CD4-positive, alpha-beta T cell (primary cell): ENCODE measurements at regions of chr6 and their contacts with region 1.

Region 1: DNA sequence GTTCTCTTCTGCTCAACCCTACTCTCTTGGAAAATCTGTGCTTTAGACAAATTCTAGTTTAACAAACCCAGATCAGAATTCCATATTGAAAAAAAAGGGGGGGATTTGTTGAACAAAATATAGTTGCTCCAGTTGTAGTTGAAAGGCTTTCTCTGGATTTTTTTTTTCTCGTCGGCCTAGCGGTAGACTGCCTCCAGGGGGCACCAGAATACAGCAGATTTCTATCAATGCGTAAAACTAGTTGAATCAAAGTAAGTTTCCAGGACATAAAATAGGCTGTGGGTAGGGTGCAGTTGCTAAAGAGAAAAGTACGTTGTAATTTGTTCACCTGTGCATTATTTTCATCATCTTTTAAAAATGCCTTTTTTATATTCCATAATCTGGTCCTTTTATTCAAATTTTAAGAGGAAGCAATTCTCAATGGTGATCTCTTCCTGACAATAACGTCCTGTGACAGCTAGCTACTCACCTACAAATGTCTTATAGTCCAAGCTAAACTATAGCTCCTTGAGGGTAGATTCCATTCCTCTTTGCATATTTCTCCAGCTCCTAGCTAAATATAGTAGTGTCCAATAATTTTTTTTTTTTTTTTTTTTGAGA is 105.4 kb downstream of the PERP start:
- DNase-seq: peak; percentile 35 to 80 (median 56)
- ATAC-seq: peak; percentile 58
- H3K4me3 ChIP-seq: no peak overlapping the region
- H3K4me3 Mint-ChIP-seq: no peak overlapping the region
- H3K27ac ChIP-seq: no peak overlapping the region
- H3K27ac Mint-ChIP-seq: no peak overlapping the region
- H3K4me1 ChIP-seq: no peaks in the 10 kb centered on the region
- H3K4me1 Mint-ChIP-seq: no peaks in the 10 kb centered on the region
- H3K27me3 ChIP-seq: no peaks in the 10 kb centered on the region
- H3K27me3 Mint-ChIP-seq: no peaks in the 10 kb centered on the region
- CTCF ChIP-seq: peak; percentile 94

Region 2: GRCh38 chr6:137271245-137272183 is 730.3 kb before region 1 on chr6:
- CTCF ChIA-PET with region 1: interaction called, 4 read pairs
- POLR2A ChIA-PET with region 1: no interaction called
- intact Hi-C with region 1: loop called in 1 of 2 experiments (anchors 2 kb)
- DNase-seq: peak in 3 of 14 experiments; percentile 58 to 64 (median 62)
- ATAC-seq: peak; percentile 66
- H3K4me3 ChIP-seq: no peak overlapping the region
- H3K4me3 Mint-ChIP-seq: no peak overlapping the region
- H3K27ac ChIP-seq: no peak overlapping the region
- H3K27ac Mint-ChIP-seq: no peak overlapping the region
- H3K4me1 ChIP-seq: no peaks in the 10 kb centered on the region
- H3K4me1 Mint-ChIP-seq: peaks cover 4% of the 10 kb centered on the region
- H3K27me3 ChIP-seq: no peaks in the 10 kb centered on the region
- H3K27me3 Mint-ChIP-seq: peaks cover 8% of the 10 kb centered on the region
- CTCF ChIP-seq: peak; percentile 90

Region 3: DNA sequence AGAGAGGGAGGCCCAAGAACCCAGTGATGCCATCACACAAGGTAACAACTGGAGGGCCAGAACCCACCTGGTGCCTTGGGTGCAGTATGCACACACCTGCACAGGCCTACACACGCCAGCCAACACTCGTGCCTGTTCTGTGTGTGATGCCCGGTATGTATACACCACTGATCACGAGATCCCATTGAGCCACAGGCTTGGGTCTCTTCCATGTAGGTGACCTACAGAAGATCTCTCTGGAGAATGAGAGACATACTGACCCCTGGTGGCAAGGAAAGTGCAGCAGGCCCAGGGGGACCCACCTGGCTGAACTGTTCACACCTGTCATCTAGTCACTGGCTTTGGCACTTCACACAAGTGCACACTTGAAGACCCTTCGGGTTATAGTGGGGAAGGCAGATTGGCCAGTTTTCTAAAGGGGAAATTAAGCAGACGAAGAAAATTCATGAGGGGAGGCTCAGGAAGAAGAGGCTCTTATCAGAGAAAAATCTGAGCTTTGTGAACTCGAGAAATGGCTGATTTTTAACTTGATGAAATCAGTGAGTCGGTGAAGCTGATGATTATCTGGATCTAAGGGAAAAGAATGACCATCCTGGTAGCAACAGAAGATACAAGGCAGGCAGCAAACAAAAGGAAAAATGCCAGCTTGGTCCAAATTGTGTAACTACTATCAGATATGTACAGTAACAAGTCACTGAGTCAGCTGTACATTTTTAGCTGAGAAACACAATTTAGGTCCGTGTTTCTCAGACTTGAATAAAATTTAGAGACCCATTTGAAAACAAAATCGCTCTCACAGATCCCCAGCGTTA is 285.5 kb after region 1 on chr6:
- CTCF ChIA-PET with region 1: no interaction called
- POLR2A ChIA-PET with region 1: no interaction called
- intact Hi-C with region 1: loop called in 1 of 2 experiments (anchors 5 kb)
- DNase-seq: peak in 12 of 14 experiments; percentile 8 to 65 (median 34)
- ATAC-seq: no peak
- H3K4me3 ChIP-seq: no peak overlapping the region
- H3K4me3 Mint-ChIP-seq: no peak overlapping the region
- H3K27ac ChIP-seq: no peak overlapping the region
- H3K27ac Mint-ChIP-seq: no peak overlapping the region
- H3K4me1 ChIP-seq: no peaks in the 10 kb centered on the region
- H3K4me1 Mint-ChIP-seq: no peaks in the 10 kb centered on the region
- H3K27me3 ChIP-seq: no peaks in the 10 kb centered on the region
- H3K27me3 Mint-ChIP-seq: peaks cover 3% of the 10 kb centered on the region
- CTCF ChIP-seq: peak; percentile 57

Region 4: GRCh38 chr6:138509371-138509770 is 507.5 kb after region 1 on chr6:
- CTCF ChIA-PET with region 1: no interaction called
- POLR2A ChIA-PET with region 1: no interaction called
- intact Hi-C with region 1: loop called in 1 of 2 experiments (anchors 10 kb)
- DNase-seq: peak in 13 of 14 experiments; percentile 9 to 75 (median 35)
- ATAC-seq: peak; percentile 44
- H3K4me3 ChIP-seq: no peak overlapping the region
- H3K4me3 Mint-ChIP-seq: no peak overlapping the region
- H3K27ac ChIP-seq: no peak overlapping the region
- H3K27ac Mint-ChIP-seq: no peak overlapping the region
- H3K4me1 ChIP-seq: no peaks in the 10 kb centered on the region
- H3K4me1 Mint-ChIP-seq: peaks cover 5% of the 10 kb centered on the region
- H3K27me3 ChIP-seq: no peaks in the 10 kb centered on the region
- H3K27me3 Mint-ChIP-seq: no peaks in the 10 kb centered on the region
- CTCF ChIP-seq: peak; percentile 77

Region 5: DNA sequence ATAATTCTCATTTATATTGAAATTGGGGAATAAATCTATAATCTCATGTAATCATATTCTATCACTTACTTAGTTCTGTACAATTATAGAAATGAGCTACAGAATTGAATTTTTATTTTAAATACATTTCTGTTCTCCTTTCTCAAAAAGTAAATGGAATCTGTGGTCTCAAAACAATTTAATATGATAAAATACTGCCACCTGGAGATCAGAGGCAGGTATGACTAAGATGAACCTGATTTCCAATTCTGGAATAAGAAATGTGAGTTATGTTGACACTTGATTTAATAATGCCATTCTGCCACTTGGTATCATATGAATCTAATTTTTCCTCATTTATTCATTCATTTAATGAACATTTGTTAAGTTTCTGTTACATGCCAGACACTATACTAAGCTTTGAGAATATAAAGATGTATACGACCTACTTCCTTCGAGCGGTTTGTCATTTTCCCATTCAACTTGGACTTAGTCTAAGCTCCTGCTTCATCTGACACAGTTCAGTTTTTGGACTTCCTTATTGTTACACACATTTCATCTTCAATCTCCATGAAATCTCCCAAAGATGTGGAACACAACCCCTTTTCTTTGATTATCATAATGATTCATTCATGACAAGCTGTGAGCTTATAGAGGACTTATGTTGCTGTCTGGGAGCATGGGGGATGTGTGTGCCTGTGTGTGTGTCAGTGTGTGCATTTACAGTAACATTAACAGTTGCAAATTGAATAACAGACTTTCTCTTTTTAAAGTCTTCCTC is 764.2 kb after region 1 on chr6:
- CTCF ChIA-PET with region 1: no interaction called
- POLR2A ChIA-PET with region 1: no interaction called
- intact Hi-C with region 1: loop called in 1 of 2 experiments (anchors 5 kb)
- DNase-seq: peak in 4 of 14 experiments; percentile 4 to 54 (median 52)
- ATAC-seq: peak; percentile 41
- H3K4me3 ChIP-seq: no peak overlapping the region
- H3K4me3 Mint-ChIP-seq: no peak overlapping the region
- H3K27ac ChIP-seq: no peak overlapping the region
- H3K27ac Mint-ChIP-seq: no peak overlapping the region
- H3K4me1 ChIP-seq: no peaks in the 10 kb centered on the region
- H3K4me1 Mint-ChIP-seq: no peaks in the 10 kb centered on the region
- H3K27me3 ChIP-seq: no peaks in the 10 kb centered on the region
- H3K27me3 Mint-ChIP-seq: no peaks in the 10 kb centered on the region
- CTCF ChIP-seq: peak; percentile 89